ENCODE measurements at regions of chr3 and their contacts with region 1.

Region 1: GRCh38 chr3:50436114-50436674 is 67.2 kb downstream of the CACNA2D2 start:
- DNase-seq: peak; percentile 85
- H3K4me3 ChIP-seq: peak overlapping the region in 1 of 2 experiments; percentile 33; a peak in 1 of 4 replicates
- H3K27ac ChIP-seq: peak overlapping the region in 1 of 2 experiments; percentile 100; a peak in 2 of 4 replicates
- H3K4me1 ChIP-seq: peaks cover 0 to 97% of the 10 kb centered on the region in 2 experiments; a peak in 2 of 4 replicates
- H3K27me3 ChIP-seq: no peaks in the 10 kb centered on the region
- CTCF ChIP-seq: peak; percentile 84
- EP300 ChIP-seq: no peak
- RAD21 ChIP-seq: peak; percentile 85

Region 2: DNA sequence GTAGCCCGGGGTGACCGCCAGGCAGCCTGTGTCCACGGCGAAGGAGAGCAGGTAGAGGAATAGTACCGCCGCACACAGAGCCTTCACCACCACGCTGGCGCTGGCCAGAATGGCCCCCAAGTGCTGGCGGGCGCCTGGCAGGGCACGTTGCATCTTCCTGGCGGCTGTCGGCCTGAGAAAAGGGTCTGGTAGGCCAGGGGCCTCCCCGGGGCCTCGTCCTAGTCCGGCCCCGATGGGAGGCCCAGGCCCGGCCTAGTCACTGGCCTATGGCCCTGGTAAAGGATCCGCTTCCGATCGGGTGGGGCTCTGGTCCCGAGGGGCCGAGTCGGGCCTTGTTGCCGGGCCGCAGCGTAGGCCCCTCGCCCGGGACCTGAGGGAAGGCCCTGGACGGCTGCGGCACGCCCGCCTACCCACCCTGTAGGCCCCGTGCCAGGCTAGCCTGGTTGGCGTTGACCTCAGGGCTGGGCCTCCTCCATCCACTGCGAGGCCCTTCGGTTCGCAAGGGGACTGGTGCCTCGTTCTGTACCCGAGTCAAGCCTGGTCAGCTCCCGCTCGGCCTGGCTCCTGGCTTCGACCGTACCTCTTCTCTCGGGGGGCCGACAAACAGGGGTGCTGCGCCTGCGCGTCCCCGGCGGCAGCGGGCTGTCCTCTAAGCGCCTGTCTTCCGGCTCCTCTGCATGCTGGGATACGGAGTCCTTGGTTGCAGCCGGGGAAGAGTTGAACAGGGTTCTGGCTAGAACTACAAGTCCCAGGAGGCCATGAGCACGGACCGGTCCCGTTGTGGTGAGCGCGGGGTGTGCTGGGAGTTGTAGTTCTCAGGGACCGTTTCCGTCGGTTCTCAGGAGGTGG is 77.1 kb before region 1 on chr3 and contains the start of gene TMEM115:
- CTCF ChIA-PET with region 1: interaction called, 19 read pairs
- POLR2A ChIA-PET with region 1: interaction called, 6 read pairs
- DNase-seq: peak; percentile 98
- H3K4me3 ChIP-seq: peak within 1 kb of the TSS; percentile 77 to 95
- H3K27ac ChIP-seq: peak within 1 kb of the TSS; percentile 60 to 84; a peak in 3 of 4 replicates
- H3K4me1 ChIP-seq: peaks cover 8 to 49% of the 10 kb centered on the region in 2 experiments; a peak in 2 of 4 replicates
- H3K27me3 ChIP-seq: no peaks in the 10 kb centered on the region
- CTCF ChIP-seq: no peak
- EP300 ChIP-seq: no peak; a peak in 1 of 4 replicates
- RAD21 ChIP-seq: no peak
- polyA plus RNA-seq, gene TMEM115: 47.8 and 49.2 TPM in 2 replicates

Region 3: GRCh38 chr3:50381383-50381782 is 54.8 kb before region 1 on chr3:
- CTCF ChIA-PET with region 1: interaction called, 27 read pairs
- POLR2A ChIA-PET with region 1: interaction called, 19 read pairs
- DNase-seq: peak; percentile 90
- H3K4me3 ChIP-seq: peak overlapping the region in 1 of 2 experiments; percentile 41; a peak in 1 of 4 replicates
- H3K27ac ChIP-seq: peak overlapping the region in 1 of 2 experiments; percentile 100; a peak in 2 of 4 replicates
- H3K4me1 ChIP-seq: peaks cover 0 to 98% of the 10 kb centered on the region in 2 experiments; a peak in 2 of 4 replicates
- H3K27me3 ChIP-seq: no peaks in the 10 kb centered on the region
- CTCF ChIP-seq: no peak
- EP300 ChIP-seq: peak in 1 of 2 experiments; percentile 97; a peak in 2 of 4 replicates
- RAD21 ChIP-seq: no peak; the same call in 1 of the 2 replicates

Region 4: DNA sequence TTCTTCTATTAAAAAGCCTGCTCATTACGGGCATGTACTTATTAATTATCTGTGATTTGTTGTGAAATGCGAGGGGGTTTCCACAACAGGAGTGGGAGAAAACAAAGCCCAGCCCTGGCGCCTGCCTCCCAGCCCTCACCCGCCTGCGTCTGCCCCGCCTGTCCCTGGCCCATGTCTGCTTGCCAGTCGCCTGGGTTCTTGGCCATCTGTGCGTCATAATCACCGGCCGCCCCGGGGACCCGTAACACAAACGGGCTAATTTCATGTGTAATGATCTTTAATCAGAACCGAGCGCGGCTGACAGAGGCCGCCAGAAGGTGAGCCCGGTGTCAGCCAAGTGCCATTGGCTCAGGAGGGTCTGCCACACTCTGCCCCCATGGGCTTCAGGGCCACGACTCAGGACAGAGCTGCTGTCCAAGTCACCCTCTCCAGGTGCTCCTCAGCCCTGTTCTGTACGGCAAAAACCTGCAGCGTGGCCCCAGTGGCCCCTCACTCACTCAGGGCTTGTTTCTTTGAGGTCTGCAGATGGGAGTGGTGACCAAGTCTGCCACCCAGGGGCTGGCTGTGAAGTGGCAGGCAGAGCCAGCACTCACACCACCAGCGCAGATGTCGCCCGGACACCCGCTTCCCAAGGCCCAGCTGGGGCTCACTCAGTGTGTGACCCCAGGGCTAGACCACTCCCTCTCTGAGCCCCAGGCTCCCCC is 48.0 kb before region 1 on chr3:
- CTCF ChIA-PET with region 1: interaction called, 16 read pairs
- POLR2A ChIA-PET with region 1: interaction called, 14 read pairs
- DNase-seq: peak; percentile 89
- H3K4me3 ChIP-seq: no peak overlapping the region
- H3K27ac ChIP-seq: peak overlapping the region in 1 of 2 experiments; percentile 100; a peak in 2 of 4 replicates
- H3K4me1 ChIP-seq: peaks cover 0 to 99% of the 10 kb centered on the region in 2 experiments; a peak in 2 of 4 replicates
- H3K27me3 ChIP-seq: no peaks in the 10 kb centered on the region
- CTCF ChIP-seq: peak; percentile 46
- EP300 ChIP-seq: peak in 1 of 2 experiments; percentile 86; a peak in 1 of 4 replicates
- RAD21 ChIP-seq: peak; percentile 73

Region 5: GRCh38 chr3:50519471-50520089 is 83.4 kb after region 1 on chr3:
- CTCF ChIA-PET with region 1: interaction called, 43 read pairs
- POLR2A ChIA-PET with region 1: interaction called, 4 read pairs
- DNase-seq: peak; percentile 79
- H3K4me3 ChIP-seq: peak overlapping the region in 1 of 2 experiments; percentile 26; a peak in 1 of 4 replicates
- H3K27ac ChIP-seq: no peak overlapping the region
- H3K4me1 ChIP-seq: peaks cover 0 to 61% of the 10 kb centered on the region in 2 experiments; a peak in 2 of 4 replicates
- H3K27me3 ChIP-seq: peaks cover 21% of the 10 kb centered on the region; the same call in 1 of the 2 replicates
- CTCF ChIP-seq: peak; percentile 86
- EP300 ChIP-seq: no peak
- RAD21 ChIP-seq: peak; percentile 74

Region 6: DNA sequence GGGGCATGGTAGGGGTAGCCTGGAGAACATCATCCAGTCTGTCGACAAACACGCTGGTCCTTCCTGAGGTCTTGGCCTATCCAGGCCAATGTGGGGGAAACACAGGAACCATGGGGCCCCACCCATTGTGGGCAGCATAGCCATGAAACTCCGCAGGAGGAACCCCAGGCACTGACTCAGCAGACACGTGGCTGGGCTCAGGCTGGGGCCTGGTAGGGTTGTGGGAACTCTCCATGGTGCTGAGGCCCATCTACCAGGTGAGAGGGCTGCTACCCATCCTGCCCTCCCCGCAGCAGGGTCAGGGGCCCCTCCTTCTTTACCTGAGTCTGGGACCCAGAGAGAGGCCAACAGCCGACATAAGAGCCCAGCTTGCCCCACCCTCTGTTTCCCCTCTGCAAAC is 89.8 kb after region 1 on chr3:
- CTCF ChIA-PET with region 1: interaction called, 23 read pairs
- POLR2A ChIA-PET with region 1: no interaction called
- DNase-seq: no peak
- H3K4me3 ChIP-seq: no peak overlapping the region
- H3K27ac ChIP-seq: no peak overlapping the region; a peak in 1 of 4 replicates
- H3K4me1 ChIP-seq: peaks cover 0 to 28% of the 10 kb centered on the region in 2 experiments; a peak in 1 of 4 replicates
- H3K27me3 ChIP-seq: peaks cover 26% of the 10 kb centered on the region
- CTCF ChIP-seq: no peak
- EP300 ChIP-seq: no peak
- RAD21 ChIP-seq: no peak